AG04450 (cell line): ENCODE measurements at regions of chr6 and their contacts with region 1.

Region 1: DNA sequence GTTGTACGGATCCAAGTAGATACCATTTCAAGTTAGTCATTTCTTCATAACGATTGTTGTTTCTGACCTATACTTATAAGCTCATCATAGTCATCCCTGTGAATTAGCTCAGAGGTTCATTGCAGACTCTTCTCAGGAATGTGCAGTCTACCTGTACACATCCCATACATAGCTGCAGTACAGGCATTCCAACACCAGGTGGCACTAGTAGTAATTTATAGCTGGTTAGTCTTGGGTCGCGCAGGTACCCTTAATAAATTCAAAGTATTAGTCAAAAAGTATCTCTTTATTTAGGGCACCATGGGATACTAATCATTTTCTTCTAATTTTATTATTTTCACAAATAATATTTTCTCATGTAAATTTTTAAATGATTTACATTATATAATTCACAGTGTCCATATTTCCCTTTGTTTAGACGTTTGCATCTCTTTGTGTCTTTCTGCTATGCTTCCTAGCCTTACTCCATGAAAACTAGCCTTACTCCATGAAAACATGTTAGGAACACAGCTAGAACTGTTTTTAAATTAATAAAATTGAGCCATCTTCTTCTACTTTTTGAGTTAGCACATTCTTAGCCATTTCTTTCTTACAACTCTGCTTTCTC is 128.6 kb upstream of the FAM83B start:
- DNase-seq: no peak
- H3K4me3 ChIP-seq: no peak overlapping the region
- H3K27ac ChIP-seq: no peak overlapping the region
- H3K27me3 ChIP-seq: no peaks in the 10 kb centered on the region
- CTCF ChIP-seq: peak; percentile 91

Region 2: GRCh38 chr6:54681987-54682386 is 36.0 kb before region 1 on chr6:
- CTCF ChIA-PET with region 1: interaction called, 15 read pairs
- POLR2A ChIA-PET with region 1: no interaction called
- DNase-seq: peak; percentile 18
- H3K4me3 ChIP-seq: no peak overlapping the region
- H3K27ac ChIP-seq: no peak overlapping the region
- H3K27me3 ChIP-seq: no peaks in the 10 kb centered on the region
- CTCF ChIP-seq: no peak

Region 3: DNA sequence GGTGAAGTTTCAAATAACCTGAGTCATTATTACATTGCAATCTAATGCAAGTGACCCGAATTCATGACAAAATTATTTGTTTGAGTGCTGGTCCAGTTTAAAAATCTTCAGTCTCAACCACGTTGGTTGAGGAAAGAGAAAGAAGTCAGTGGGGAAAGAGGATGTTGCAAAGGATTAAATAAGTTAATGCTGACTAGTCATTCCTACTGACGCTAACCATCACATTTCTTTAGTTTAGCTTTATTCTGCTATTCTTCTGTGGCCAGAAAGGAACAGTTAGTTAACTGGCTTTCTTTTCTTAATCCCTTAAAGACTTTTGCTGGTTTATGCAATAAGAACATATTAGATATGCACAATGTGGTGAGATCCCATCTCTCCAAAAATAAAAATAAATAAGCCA is 15.2 kb before region 1 on chr6:
- CTCF ChIA-PET with region 1: interaction called, 70 read pairs
- POLR2A ChIA-PET with region 1: no interaction called
- DNase-seq: no peak
- H3K4me3 ChIP-seq: no peak overlapping the region
- H3K27ac ChIP-seq: no peak overlapping the region
- H3K27me3 ChIP-seq: no peaks in the 10 kb centered on the region
- CTCF ChIP-seq: no peak

Region 4: GRCh38 chr6:54737247-54737646 is 19.3 kb after region 1 on chr6:
- CTCF ChIA-PET with region 1: interaction called, 20 read pairs
- POLR2A ChIA-PET with region 1: no interaction called
- DNase-seq: no peak
- H3K4me3 ChIP-seq: no peak overlapping the region
- H3K27ac ChIP-seq: no peak overlapping the region
- H3K27me3 ChIP-seq: no peaks in the 10 kb centered on the region
- CTCF ChIP-seq: 0 out of 2 replicates have a peak, but pooled peaks have one; percentile 20

Region 5: GRCh38 chr6:54992789-54993188 is 274.8 kb after region 1 on chr6:
- CTCF ChIA-PET with region 1: interaction called, 10 read pairs
- POLR2A ChIA-PET with region 1: no interaction called
- DNase-seq: no peak
- H3K4me3 ChIP-seq: no peak overlapping the region
- H3K27ac ChIP-seq: no peak overlapping the region
- H3K27me3 ChIP-seq: no peaks in the 10 kb centered on the region
- CTCF ChIP-seq: peak; percentile 39